Activated CD4-positive, alpha-beta T cell treated with anti-CD3 and anti-CD28 coated beads for 36 hours (primary cell): ENCODE measurements at regions of chr19 and their contacts with region 1.

Region 1: GRCh38 chr19:29610563-29611271 is 4.6 kb downstream of the POP4 start:
- DNase-seq: peak; percentile 93
- ATAC-seq: peak; percentile 76
- H3K4me3 Mint-ChIP-seq: no peak overlapping the region
- H3K27ac Mint-ChIP-seq: no peak overlapping the region
- H3K4me1 Mint-ChIP-seq: peaks cover 12% of the 10 kb centered on the region
- H3K27me3 Mint-ChIP-seq: no peaks in the 10 kb centered on the region

Region 2: DNA sequence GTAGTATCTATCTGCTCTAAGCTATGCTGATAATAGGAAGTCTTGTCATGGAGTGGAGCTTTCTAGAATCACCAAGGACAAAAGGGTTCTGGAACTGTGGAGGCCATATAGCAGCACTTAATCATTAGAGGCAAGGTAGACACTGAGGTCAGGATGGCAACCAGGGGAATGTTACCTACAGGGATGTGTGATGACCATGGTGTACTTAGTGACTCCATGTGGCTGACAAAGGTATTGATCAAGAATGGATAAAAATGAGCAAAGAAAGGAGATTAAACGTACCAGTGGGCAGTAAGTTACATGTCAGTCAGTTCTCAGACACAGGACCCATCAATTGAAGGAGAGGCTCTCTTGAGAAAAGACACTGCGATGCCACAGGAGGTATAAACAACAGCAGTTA is 157.1 kb before region 1 on chr19:
- CTCF ChIA-PET with region 1: no interaction called
- POLR2A ChIA-PET with region 1: no interaction called
- intact Hi-C with region 1: no loop called
- DNase-seq: no peak
- ATAC-seq: no peak
- H3K4me3 Mint-ChIP-seq: no peak overlapping the region
- H3K27ac Mint-ChIP-seq: no peak overlapping the region
- H3K4me1 Mint-ChIP-seq: no peaks in the 10 kb centered on the region
- H3K27me3 Mint-ChIP-seq: peaks cover 13% of the 10 kb centered on the region

Region 3: GRCh38 chr19:29576761-29577648 is 33.7 kb before region 1 on chr19:
- CTCF ChIA-PET with region 1: interaction called, 3 read pairs
- POLR2A ChIA-PET with region 1: interaction called, 5 read pairs
- intact Hi-C with region 1: loop called in 1 of 2 experiments (anchors 1 kb)
- DNase-seq: peak; percentile 70
- ATAC-seq: peak; percentile 98
- H3K4me3 Mint-ChIP-seq: no peak overlapping the region
- H3K27ac Mint-ChIP-seq: no peak overlapping the region
- H3K4me1 Mint-ChIP-seq: peaks cover 26% of the 10 kb centered on the region
- H3K27me3 Mint-ChIP-seq: peaks cover 59% of the 10 kb centered on the region

Region 4: DNA sequence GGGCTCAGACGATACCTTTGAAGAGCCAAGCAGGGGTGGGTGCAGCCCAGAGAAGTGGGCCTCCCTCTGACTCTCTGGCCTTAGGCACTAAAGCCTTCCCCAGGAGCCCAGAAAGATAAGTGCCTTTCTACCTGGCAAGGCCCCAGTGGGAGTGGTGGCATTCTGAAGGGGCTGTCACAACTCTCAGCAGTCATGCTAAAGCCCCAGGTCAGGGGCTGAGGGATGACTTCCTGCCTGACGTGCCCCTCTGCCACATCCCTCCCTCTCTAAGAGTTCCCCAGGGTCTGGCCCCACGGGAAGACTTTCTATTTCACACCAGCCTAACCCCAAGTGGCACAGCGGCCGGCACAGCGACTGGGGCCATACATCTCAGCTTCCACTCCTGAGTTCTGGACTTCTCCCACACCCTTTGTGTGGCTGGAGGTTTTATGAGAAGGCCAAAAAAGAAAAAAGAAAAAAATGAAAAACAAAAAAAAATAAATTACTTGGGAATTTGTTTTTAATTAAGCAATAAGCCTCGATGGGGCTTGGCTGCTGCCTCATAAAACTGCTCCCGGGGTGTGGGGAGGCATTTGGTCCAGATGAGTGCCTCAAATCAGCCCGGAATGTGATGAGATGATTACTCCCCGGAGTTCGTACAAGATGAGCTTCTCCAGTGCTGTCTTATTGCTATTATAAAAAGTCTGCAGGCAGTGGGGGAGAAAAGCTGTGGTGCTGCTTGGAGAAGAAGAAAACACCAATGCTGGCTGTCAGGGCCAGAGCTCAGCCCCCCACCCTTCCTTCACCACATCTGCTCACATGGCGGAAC is 26.0 kb after region 1 on chr19:
- CTCF ChIA-PET with region 1: interaction called, 12 read pairs
- POLR2A ChIA-PET with region 1: no interaction called
- intact Hi-C with region 1: no loop called
- DNase-seq: no peak
- ATAC-seq: no peak
- H3K4me3 Mint-ChIP-seq: no peak overlapping the region
- H3K27ac Mint-ChIP-seq: no peak overlapping the region
- H3K4me1 Mint-ChIP-seq: no peaks in the 10 kb centered on the region
- H3K27me3 Mint-ChIP-seq: no peaks in the 10 kb centered on the region

Region 5: DNA sequence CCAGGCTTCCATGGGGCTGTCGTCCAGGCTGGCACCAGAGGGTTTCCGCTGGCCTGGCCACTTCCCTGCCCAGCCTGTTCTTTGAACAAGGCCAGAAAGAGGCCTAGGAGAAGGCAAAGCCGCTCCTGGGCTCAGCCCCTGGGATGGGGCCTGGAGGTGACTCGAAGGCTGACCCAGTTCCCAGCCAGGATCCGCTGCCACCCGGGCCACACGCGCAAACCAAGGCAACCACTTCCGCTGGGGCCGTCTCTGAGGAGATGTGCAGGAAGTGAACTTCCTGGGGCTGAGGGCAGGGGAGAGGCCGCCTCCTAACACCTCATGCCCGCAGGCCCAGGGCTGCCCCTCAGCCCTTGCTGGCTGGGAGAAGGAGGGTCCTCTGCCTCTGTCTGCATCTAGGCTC is 69.7 kb after region 1 on chr19:
- CTCF ChIA-PET with region 1: interaction called, 20 read pairs
- POLR2A ChIA-PET with region 1: no interaction called
- intact Hi-C with region 1: no loop called
- DNase-seq: peak; percentile 92
- ATAC-seq: peak; percentile 91
- H3K4me3 Mint-ChIP-seq: peak overlapping the region; percentile 61
- H3K27ac Mint-ChIP-seq: peak overlapping the region; percentile 91
- H3K4me1 Mint-ChIP-seq: peaks cover 75% of the 10 kb centered on the region
- H3K27me3 Mint-ChIP-seq: no peaks in the 10 kb centered on the region

Region 6: DNA sequence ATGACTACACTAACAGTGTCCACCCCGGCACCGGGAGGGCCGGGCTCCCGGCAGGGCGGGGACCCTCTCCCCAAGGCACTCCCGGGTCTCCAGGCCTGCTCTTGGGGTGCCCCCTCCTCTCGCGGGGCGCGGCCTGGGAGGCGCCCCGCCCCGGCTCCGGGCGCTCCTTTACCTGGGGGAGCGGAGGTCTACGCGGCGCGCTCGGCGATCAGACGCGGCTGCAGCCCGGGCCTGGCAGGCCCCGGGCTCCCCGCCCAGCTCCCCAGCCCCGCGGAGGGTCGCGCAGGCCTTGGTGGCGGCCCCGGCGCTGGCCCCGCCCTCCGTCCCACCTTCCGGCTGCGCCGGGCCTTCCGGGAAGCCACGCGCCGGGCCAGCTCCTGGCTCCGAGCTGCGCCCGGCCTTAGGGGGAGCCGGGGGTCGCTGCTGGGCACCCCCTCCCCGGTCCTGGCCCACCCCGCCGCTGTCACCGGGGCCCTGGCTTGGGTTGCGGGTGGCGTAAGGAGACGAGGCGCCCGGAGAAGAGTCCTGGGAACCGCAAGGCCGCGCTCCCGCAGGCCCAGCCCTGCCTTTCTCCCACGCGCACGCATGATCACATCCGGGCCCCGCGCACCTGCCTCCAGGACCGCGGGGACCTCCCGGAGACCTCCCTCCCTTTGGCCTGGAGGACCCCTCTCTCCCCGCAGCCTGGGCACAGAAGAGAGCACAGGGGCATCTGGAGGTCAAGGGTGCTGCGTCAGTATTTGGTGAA is 104.4 kb after region 1 on chr19 and contains the start of gene C19orf12:
- CTCF ChIA-PET with region 1: interaction called, 130 read pairs
- POLR2A ChIA-PET with region 1: interaction called, 6 read pairs
- intact Hi-C with region 1: loop called (anchors 1 kb)
- DNase-seq: peak; percentile 82
- ATAC-seq: peak; percentile 56
- H3K4me3 Mint-ChIP-seq: peak within 1 kb of the TSS; percentile 92
- H3K27ac Mint-ChIP-seq: peak within 1 kb of the TSS; percentile 99
- H3K4me1 Mint-ChIP-seq: peaks cover 52% of the 10 kb centered on the region
- H3K27me3 Mint-ChIP-seq: no peaks in the 10 kb centered on the region
- total RNA-seq, gene C19orf12: 26.7 to 35.7 TPM

Region 7: DNA sequence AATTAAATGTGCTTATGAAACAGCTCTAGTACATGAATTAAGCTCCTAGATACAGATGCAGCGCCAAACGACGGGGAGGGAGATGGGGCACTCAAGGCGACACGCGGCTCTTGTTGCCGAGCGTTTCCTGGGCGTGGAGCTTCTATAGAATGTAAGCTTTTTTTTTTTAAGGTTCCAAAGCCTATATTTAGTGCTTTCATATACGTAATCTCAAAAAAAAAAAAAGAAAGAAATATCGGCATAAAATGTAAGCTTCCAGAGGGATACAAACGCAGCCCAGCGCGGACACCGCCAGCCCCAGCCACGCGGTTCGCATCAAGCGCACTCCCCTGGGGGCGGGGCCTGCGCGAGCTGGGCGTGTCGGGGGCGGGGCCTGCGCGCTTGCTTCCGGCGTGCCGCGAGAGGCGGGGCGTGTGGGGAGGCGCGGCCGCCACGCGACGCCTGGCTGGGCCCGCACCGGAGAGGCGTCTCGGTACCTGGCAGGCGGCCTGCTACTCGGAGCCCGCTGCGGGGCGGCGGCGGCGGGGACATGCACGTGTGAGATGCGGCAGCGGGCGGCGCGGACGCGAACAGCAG is 331.2 kb after region 1 on chr19 and contains the start of gene URI1:
- CTCF ChIA-PET with region 1: no interaction called
- POLR2A ChIA-PET with region 1: no interaction called
- intact Hi-C with region 1: loop called in 1 of 2 experiments (anchors 1 kb)
- DNase-seq: peak; percentile 97
- ATAC-seq: peak; percentile 82
- H3K4me3 Mint-ChIP-seq: peak within 1 kb of the TSS; percentile 96
- H3K27ac Mint-ChIP-seq: peak within 1 kb of the TSS; percentile 95
- H3K4me1 Mint-ChIP-seq: peaks cover 41% of the 10 kb centered on the region
- H3K27me3 Mint-ChIP-seq: no peaks in the 10 kb centered on the region
- total RNA-seq, gene URI1: 61.3 to 69.7 TPM